Kidney (tissue), 22 donors: ENCODE measurements at regions of chr2 and their contacts with region 1.

Region 1: GRCh38 chr2:172817411-172817810 is 81.8 kb downstream of the RAPGEF4 start:
- DNase-seq: no peak
- H3K4me3 ChIP-seq: no peak overlapping the region
- H3K27ac ChIP-seq: no peak overlapping the region
- H3K4me1 ChIP-seq: no peaks in the 10 kb centered on the region
- H3K27me3 ChIP-seq: no peaks in the 10 kb centered on the region
- CTCF ChIP-seq: no peak

Region 2: DNA sequence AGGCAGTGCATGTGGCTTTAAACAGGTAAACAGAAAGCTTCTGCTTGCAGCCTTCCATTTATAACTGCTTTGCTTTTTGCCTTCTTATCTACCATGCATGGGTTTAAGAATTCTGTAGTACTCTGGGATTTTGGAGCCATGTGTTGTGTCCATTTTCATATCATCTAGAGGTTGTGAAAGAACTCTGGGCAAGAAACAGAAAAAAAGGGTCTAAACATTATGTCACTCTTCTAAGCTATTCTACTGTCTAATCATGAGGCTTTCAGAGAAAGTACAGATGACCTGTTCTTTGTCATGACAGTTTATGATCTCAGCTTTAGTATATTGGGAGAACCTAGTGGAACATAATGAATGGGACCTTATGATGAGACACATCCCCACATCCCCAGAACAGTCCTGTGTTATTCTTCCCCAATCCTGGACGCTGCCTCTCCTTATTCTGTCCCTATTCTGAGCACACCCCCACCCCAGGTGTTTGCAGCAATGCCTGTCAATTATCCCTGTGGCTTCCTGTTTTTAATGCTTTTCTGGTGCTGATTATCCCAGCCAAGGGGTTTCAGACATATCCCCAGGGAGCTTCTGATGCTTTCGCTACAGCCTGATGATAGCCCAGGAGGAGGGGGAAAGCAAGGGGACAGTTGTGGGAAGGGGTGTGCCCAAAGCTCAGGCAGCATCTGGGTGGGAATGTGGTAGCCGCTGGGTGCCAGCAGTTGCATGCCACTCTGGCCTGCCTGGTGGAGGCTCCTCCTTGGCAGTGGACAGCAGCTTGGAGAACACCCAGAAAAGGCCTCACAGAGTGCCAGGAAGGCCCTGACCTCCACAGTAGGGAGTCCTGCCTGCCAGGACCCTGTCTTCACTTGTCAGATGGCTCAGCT is 88.8 kb after region 1 on chr2:
- intact Hi-C with region 1: no loop called
- DNase-seq: no peak
- H3K4me3 ChIP-seq: no peak overlapping the region
- H3K27ac ChIP-seq: no peak overlapping the region
- H3K4me1 ChIP-seq: no peaks in the 10 kb centered on the region
- H3K27me3 ChIP-seq: no peaks in the 10 kb centered on the region
- CTCF ChIP-seq: no peak

Region 3: GRCh38 chr2:172931918-172932520 is 114.6 kb after region 1 on chr2:
- intact Hi-C with region 1: loop called (anchors 5 kb)
- DNase-seq: peak in 4 of 5 donors; percentile 69 to 89 (median 80)
- H3K4me3 ChIP-seq: no peak overlapping the region
- H3K27ac ChIP-seq: no peak overlapping the region
- H3K4me1 ChIP-seq: peaks cover 0 to 10% (median 8%) of the 10 kb centered on the region in 3 donors
- H3K27me3 ChIP-seq: no peaks in the 10 kb centered on the region
- CTCF ChIP-seq: peak; percentile 73